Activated naive CD4-positive, alpha-beta T cell treated with anti-CD3 and anti-CD28 coated beads for 36 hours (primary cell): ENCODE measurements at regions of chr22 and their contacts with region 1.

Region 1: GRCh38 chr22:49930739-49931412 is 12.4 kb downstream of the CRELD2 start:
- DNase-seq: peak; percentile 87
- H3K4me3 Mint-ChIP-seq: peak overlapping the region; percentile 27
- H3K27ac Mint-ChIP-seq: peak overlapping the region; percentile 67
- H3K4me1 Mint-ChIP-seq: peaks cover 46% of the 10 kb centered on the region
- H3K27me3 Mint-ChIP-seq: no peaks in the 10 kb centered on the region

Region 2: DNA sequence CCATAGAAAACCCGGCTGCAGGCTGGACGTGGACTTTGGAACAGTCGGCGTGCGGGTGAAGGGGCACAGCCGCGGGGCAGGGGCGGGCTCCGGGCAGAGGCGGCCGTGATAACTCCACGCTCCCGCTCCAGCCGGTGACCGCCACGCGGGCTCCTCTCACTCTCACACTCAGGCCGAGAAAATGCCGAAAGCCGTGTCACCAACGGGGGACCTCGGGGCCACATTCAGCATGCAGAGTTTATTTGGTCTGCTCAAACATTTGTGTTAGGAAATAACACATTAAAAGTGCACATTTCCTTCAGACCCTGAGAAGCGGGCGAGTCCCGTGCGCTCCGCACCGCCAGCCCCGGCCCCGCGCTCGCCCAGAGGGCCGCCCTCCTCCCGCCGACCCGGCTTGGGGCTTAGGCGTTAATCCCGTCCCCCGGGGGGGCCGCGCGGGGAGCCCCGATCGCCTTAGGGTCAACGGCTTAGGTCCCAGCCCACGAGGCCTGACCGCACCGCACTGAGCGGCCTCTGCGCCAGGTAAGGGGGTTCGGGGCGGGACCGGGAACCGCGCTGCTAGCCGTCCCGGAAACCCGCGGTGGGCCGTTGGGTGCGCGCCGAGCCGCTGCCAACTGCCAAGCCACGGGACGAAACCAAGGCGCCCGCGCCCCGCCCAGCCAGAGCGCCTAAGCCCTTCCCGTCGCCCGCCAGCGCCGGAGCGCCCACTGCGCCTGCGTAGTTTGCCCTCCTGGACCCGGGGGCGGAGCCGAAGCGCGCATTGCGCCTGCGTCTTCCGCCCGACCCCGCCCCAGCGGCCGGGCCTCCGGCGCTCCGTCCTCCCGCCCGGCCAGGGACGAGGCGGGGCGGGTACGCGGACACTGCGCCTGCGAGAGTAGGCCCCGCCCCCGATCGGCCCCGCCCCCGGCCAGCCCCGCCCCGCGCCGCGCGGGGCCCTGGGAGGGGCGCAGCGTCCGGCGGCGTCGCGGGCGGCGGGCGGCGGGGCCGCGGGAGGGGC is 77.7 kb before region 1 on chr22 and contains the start of gene ZBED4:
- CTCF ChIA-PET with region 1: no interaction called
- intact Hi-C with region 1: no loop called
- DNase-seq: peak; percentile 98
- H3K4me3 Mint-ChIP-seq: peak within 1 kb of the TSS; percentile 95
- H3K27ac Mint-ChIP-seq: peak within 1 kb of the TSS; percentile 81
- H3K4me1 Mint-ChIP-seq: peaks cover 42% of the 10 kb centered on the region
- H3K27me3 Mint-ChIP-seq: peaks cover 5% of the 10 kb centered on the region
- total RNA-seq, gene ZBED4: 13.0 to 13.1 TPM

Region 3: DNA sequence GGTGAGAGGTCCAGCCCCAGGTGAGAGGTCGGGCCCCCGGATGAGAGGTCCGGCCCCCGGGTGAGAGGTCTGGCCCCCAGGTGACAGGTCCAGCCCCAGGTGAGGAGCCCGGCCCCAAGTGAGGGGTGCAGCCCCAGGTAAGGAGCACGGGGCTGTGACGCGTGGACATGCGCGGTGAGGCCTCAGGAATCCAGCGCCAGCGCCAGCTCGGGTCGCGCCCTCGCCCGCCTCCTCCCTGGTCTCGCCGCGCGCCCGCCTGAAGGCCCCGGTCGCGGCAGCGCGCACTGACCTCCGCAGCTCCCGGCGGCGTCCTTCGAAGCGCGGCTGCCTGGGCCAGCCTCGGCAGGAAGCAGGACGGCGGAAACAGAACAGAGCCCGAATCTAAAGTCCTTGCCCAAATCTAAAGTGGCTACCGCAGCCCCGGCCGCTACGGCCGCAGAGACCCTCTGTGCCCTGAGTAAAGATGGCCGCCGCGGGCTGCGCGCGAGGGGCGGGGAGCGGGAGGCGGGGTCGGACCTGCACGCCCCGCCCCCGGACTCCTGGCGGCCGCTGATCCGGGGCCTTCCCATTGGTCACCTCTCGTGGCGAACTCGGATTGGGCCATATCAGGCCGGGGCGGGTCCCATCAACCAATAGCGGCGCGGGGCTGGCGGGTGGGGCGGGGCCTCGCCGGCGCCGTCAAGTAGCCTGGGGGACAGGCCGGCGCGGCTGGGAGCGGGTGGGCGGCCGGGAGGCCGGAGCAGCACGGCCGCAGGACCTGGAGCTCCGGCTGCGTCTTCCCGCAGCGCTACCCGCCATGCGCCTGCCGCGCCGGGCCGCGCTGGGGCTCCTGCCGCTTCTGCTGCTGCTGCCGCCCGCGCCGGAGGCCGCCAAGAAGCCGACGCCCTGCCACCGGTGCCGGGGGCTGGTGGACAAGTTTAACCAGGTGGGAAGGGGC is 12.6 kb before region 1 on chr22 and contains the starts of genes ALG12 and CRELD2:
- CTCF ChIA-PET with region 1: no interaction called
- intact Hi-C with region 1: loop called (anchors 1 kb)
- DNase-seq: peak; percentile 98
- H3K4me3 Mint-ChIP-seq: peak within 1 kb of the TSS; percentile 83
- H3K27ac Mint-ChIP-seq: peak within 1 kb of the TSS; percentile 80
- H3K4me1 Mint-ChIP-seq: peaks cover 23% of the 10 kb centered on the region
- H3K27me3 Mint-ChIP-seq: no peaks in the 10 kb centered on the region
- total RNA-seq, gene ALG12: 7.4 to 9.6 TPM
- total RNA-seq, gene CRELD2: 15.3 to 16.2 TPM

Region 4: GRCh38 chr22:49992921-49993648 is 62.2 kb after region 1 on chr22:
- CTCF ChIA-PET with region 1: interaction called, 10 read pairs
- intact Hi-C with region 1: loop called (anchors 1 kb)
- DNase-seq: peak; percentile 85
- H3K4me3 Mint-ChIP-seq: no peak overlapping the region
- H3K27ac Mint-ChIP-seq: peak overlapping the region; percentile 19
- H3K4me1 Mint-ChIP-seq: peaks cover 4% of the 10 kb centered on the region
- H3K27me3 Mint-ChIP-seq: no peaks in the 10 kb centered on the region

Region 5: DNA sequence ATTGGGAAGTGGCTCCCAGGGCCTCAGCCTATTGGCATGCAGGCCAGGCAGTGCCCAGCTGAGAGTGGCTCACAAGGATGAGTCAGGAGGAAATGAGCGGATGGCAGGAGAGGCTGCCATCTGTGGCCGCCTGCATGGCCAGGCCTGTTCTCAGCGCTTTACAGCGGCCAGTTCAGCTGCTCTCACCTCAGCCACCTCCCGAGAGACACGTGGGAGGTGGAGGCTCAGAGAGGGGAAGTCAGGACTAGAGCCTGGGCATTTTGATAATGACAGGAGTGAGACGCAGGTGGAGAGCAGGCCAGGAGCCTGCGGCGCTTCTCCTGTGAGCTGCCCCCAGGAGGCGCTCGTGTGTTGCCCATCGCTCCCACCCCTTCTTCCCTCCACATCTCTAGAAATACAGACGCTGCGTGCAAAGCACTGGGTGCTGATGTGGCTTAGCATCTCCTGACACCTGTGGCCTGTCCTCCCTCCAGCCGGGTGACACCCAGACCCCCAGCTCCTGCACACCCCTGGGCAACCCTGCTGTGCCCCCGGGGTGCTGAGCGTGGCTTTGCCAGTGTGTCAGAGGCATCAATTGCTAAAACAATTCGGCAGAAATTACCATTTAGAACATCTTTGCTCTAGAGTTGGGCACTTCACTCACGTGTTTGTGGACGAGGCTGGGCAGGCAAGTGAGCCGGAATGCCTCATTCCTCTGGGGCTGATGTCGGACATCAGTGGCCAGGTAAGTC is 218.3 kb after region 1 on chr22:
- CTCF ChIA-PET with region 1: no interaction called
- intact Hi-C with region 1: loop called (anchors 5 kb)
- DNase-seq: peak; percentile 76
- H3K4me3 Mint-ChIP-seq: no peak overlapping the region
- H3K27ac Mint-ChIP-seq: no peak overlapping the region
- H3K4me1 Mint-ChIP-seq: no peaks in the 10 kb centered on the region
- H3K27me3 Mint-ChIP-seq: no peaks in the 10 kb centered on the region